Esophagus muscularis mucosa (tissue), 4 donors: ENCODE measurements at regions of chr19 and their contacts with region 1.

Region 1: GRCh38 chr19:35775298-35776110 is at the start of gene ARHGAP33:
- DNase-seq: peak; percentile 100
- H3K4me3 ChIP-seq: peak within 1 kb of the TSS; percentile 81 to 96 (median 90)
- H3K27ac ChIP-seq: peak within 1 kb of the TSS; percentile 52 to 70 (median 62)
- H3K4me1 ChIP-seq: peaks cover 14 to 28% (median 20%) of the 10 kb centered on the region in 4 donors
- H3K27me3 ChIP-seq: no peaks in the 10 kb centered on the region
- CTCF ChIP-seq: no peak
- EP300 ChIP-seq: no peak
- POLR2A ChIP-seq: no peak
- total RNA-seq, gene ARHGAP33: 3.3 to 11.2 (median 7.7) TPM

Region 2: DNA sequence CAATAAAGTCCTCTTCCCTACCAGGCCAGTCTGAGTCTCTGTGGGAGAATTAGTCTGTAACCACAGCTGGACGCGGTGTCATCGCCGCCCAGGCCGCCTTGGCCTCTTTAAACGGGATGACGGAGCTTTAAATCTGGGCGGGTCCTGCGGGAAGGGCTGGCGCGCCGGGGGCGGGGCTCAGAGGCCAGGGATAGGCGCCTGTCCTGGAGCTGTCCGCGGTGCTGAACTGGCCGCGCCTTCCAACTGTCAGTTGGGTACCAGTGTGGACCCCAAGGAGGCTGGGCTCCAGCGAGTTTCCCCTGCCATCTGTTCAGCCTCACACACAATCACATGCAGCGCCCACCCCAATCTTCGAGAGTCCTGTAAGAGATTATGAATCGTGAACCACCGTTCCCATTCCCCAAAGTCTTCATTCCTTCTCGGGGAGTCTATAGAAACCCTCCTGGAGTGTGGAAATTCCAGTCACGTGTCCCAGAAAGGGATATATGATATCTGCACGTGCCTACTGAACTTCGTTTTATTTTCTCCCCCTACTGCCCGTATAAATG is 104.3 kb after region 1 on chr19:
- intact Hi-C with region 1: loop called (anchors 10 kb)
- DNase-seq: no peak
- H3K4me3 ChIP-seq: no peak overlapping the region
- H3K27ac ChIP-seq: no peak overlapping the region
- H3K4me1 ChIP-seq: peaks cover 0 to 9% (median 5%) of the 10 kb centered on the region in 4 donors
- H3K27me3 ChIP-seq: peaks cover 0 to 32% (median 0%) of the 10 kb centered on the region in 4 donors
- CTCF ChIP-seq: no peak
- EP300 ChIP-seq: no peak
- POLR2A ChIP-seq: no peak